CD8-positive, alpha-beta T cell (primary cell): ENCODE measurements at regions of chr12 and their contacts with region 1.

Region 1: DNA sequence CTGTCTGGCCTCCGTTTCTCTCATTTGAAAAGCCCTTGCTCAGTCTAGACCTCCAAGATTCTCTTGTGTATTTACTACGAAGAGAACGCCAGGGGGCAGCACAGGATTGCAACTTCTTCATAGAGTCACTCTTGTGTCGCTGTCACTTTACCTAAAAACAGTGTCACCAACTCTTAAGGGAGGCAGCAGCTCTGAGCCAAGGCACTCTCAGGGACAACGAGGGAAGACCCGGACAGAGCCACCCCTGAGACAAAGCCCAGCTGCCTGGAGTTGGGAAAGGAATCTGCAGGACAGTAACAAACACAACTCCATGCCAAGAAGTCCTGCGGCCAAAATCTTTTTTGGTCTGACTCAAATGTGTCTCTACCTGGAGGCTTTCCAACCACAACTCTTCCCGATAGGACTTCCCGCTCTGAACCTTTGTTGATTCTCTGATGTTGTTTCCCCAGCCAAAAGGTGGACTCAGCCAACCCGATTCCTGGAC is 9.6 kb upstream of the RPAP3 start:
- DNase-seq: peak; percentile 56 to 88 (median 85)
- ATAC-seq: peak; percentile 85
- H3K4me3 ChIP-seq: no peak overlapping the region
- H3K4me3 Mint-ChIP-seq: no peak overlapping the region
- H3K27ac ChIP-seq: no peak overlapping the region
- H3K27ac Mint-ChIP-seq: no peak overlapping the region
- H3K4me1 ChIP-seq: peaks cover 17% of the 10 kb centered on the region
- H3K4me1 Mint-ChIP-seq: peaks cover 27% of the 10 kb centered on the region
- H3K27me3 ChIP-seq: no peaks in the 10 kb centered on the region
- H3K27me3 Mint-ChIP-seq: no peaks in the 10 kb centered on the region
- CTCF ChIP-seq: peak; percentile 67

Region 2: GRCh38 chr12:47736877-47737676 is 21.6 kb after region 1 on chr12:
- CTCF ChIA-PET with region 1: interaction called, 172 read pairs
- POLR2A ChIA-PET with region 1: interaction called, 3 read pairs
- intact Hi-C with region 1: loop called (anchors 1 to 2 kb)
- DNase-seq: no peak
- ATAC-seq: no peak
- H3K4me3 ChIP-seq: no peak overlapping the region
- H3K4me3 Mint-ChIP-seq: no peak overlapping the region
- H3K27ac ChIP-seq: no peak overlapping the region
- H3K27ac Mint-ChIP-seq: no peak overlapping the region
- H3K4me1 ChIP-seq: peaks cover 19% of the 10 kb centered on the region
- H3K4me1 Mint-ChIP-seq: peaks cover 22% of the 10 kb centered on the region
- H3K27me3 ChIP-seq: no peaks in the 10 kb centered on the region
- H3K27me3 Mint-ChIP-seq: no peaks in the 10 kb centered on the region
- CTCF ChIP-seq: no peak

Region 3: GRCh38 chr12:47767216-47767724 is 51.8 kb after region 1 on chr12:
- CTCF ChIA-PET with region 1: interaction called, 147 read pairs
- POLR2A ChIA-PET with region 1: no interaction called
- intact Hi-C with region 1: loop called (anchors 1 to 2 kb)
- DNase-seq: peak; percentile 46 to 83 (median 73)
- ATAC-seq: peak; percentile 76
- H3K4me3 ChIP-seq: no peak overlapping the region
- H3K4me3 Mint-ChIP-seq: no peak overlapping the region
- H3K27ac ChIP-seq: no peak overlapping the region
- H3K27ac Mint-ChIP-seq: no peak overlapping the region
- H3K4me1 ChIP-seq: peaks cover 28% of the 10 kb centered on the region
- H3K4me1 Mint-ChIP-seq: peaks cover 23% of the 10 kb centered on the region
- H3K27me3 ChIP-seq: no peaks in the 10 kb centered on the region
- H3K27me3 Mint-ChIP-seq: no peaks in the 10 kb centered on the region
- CTCF ChIP-seq: peak; percentile 58

Region 4: GRCh38 chr12:47812797-47813510 is 97.5 kb after region 1 on chr12:
- CTCF ChIA-PET with region 1: interaction called, 15 read pairs
- POLR2A ChIA-PET with region 1: interaction called, 3 read pairs
- intact Hi-C with region 1: no loop called
- DNase-seq: peak; percentile 77 to 95 (median 92)
- ATAC-seq: peak; percentile 73
- H3K4me3 ChIP-seq: peak overlapping the region; percentile 44 to 59
- H3K4me3 Mint-ChIP-seq: peak overlapping the region; percentile 82
- H3K27ac ChIP-seq: peak overlapping the region; percentile 65 to 73
- H3K27ac Mint-ChIP-seq: peak overlapping the region; percentile 97
- H3K4me1 ChIP-seq: peaks cover 95% of the 10 kb centered on the region
- H3K4me1 Mint-ChIP-seq: peaks cover 93% of the 10 kb centered on the region
- H3K27me3 ChIP-seq: no peaks in the 10 kb centered on the region
- H3K27me3 Mint-ChIP-seq: no peaks in the 10 kb centered on the region
- CTCF ChIP-seq: no peak

Region 5: GRCh38 chr12:48078901-48079300 is 363.5 kb after region 1 on chr12:
- CTCF ChIA-PET with region 1: no interaction called
- POLR2A ChIA-PET with region 1: no interaction called
- intact Hi-C with region 1: no loop called
- DNase-seq: no peak
- ATAC-seq: no peak
- H3K4me3 ChIP-seq: no peak overlapping the region
- H3K4me3 Mint-ChIP-seq: no peak overlapping the region
- H3K27ac ChIP-seq: no peak overlapping the region
- H3K27ac Mint-ChIP-seq: no peak overlapping the region
- H3K4me1 ChIP-seq: no peaks in the 10 kb centered on the region
- H3K4me1 Mint-ChIP-seq: no peaks in the 10 kb centered on the region
- H3K27me3 ChIP-seq: no peaks in the 10 kb centered on the region
- H3K27me3 Mint-ChIP-seq: no peaks in the 10 kb centered on the region
- CTCF ChIP-seq: no peak